ENCODE measurements at regions of chr16 and their contacts with region 1.

Region 1: DNA sequence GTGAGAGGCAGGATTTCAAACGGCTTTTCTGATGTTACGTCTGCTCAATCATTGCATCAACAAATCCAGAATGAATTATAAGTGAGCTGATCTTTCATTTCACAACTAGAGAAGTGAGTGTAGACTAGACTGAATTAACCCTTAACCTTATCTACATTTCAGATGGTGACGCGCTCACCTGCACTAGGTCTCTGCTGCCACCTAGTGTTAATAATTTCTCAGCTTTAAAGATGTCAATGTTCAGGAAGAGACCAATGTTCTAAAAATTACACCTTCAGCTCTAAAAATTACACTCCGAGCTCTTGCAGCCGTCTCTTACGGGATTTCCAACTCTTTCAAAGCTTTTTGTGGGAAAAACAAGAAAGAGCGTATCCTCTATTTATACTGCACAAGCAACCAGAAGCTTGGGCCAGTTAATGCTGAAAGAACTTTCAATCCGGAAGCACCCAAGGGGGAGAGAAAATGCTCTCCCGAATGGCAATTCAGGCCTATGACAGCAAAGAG is 88.2 kb upstream of the FA2H start:
- DNase-seq: peak in 1 of 10 donors; percentile 15

Region 2: DNA sequence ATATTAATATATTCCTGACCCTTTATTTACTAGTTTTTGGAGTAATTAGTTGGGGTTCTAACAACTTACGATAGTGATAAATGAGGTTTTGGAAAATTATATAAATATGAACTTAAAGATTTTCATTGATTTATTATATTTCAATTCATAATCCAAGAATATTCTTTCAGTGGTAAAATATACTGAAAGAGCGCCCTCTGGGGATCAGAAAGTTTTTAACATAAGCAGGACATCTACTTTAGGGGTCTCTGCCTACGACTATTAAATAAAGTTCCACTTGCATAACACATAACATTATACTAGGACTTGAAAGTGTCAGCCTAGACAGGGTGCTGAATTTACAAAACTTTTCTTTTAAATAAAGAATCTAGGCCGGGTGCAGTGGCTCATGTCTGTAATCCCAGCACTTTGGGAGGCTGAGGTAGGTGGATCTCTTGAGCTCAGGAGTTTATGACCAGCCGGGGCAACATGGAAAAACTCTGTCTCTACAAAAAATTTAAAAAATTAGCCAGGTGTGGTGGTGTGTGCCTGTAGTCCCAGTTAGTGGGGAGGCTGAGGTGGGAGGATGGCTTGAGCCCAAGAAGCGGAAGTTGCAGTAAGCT is 211.7 kb before region 1 on chr16:
- intact Hi-C with region 1: no loop called
- DNase-seq: no peak

Region 3: DNA sequence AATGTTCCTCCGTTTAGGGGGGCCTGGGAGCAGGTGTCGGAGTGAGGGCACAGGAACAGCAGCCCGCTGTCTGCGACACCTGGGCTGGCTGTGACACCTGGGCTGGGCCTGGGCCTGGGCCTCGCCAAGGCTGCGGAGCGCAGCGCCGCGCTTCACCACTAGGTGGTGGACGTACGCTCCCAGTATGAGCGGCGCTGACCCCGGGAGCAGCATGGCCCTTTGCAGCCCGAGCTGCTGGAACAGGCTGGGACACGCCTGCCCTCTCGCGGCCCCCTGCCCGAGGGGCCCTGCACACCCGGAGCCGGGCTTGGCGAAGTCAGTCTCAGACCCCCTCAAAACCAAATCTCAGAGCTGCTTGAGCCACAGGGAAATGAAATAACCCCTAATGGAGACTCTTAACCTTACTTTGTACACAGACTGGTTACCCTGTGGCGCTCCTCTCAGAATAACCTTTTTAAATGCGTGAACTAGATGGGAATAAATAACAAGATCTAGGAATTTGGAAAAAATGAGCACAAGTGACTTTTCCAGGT is 49.6 kb before region 1 on chr16:
- intact Hi-C with region 1: loop called (anchors 10 kb)
- DNase-seq: peak; percentile 43 to 96 (median 74)